ENCODE measurements at regions of chr20 and their contacts with region 1.

Region 1: GRCh38 chr20:38221119-38221589 is 39.4 kb downstream of the KIAA1755 start:
- DNase-seq: no peak
- H3K4me3 ChIP-seq: no peak overlapping the region
- H3K27ac ChIP-seq: no peak overlapping the region
- H3K4me1 ChIP-seq: peaks cover 34% of the 10 kb centered on the region
- H3K27me3 ChIP-seq: no peaks in the 10 kb centered on the region
- CTCF ChIP-seq: peak; percentile 69 to 97

Region 2: GRCh38 chr20:37564388-37565133 is 656.6 kb before region 1 on chr20:
- CTCF ChIA-PET with region 1: no interaction called
- dilution Hi-C with region 1: no loop called
- in situ Hi-C with region 1: loop called in 1 of 2 experiments (anchors 25 kb)
- intact Hi-C with region 1: loop called (anchors 1 kb)
- DNase-seq: peak; percentile 7
- H3K4me3 ChIP-seq: no peak overlapping the region
- H3K27ac ChIP-seq: no peak overlapping the region
- H3K4me1 ChIP-seq: no peaks in the 10 kb centered on the region
- H3K27me3 ChIP-seq: peaks cover 3% of the 10 kb centered on the region
- CTCF ChIP-seq: peak; percentile 57 to 96

Region 3: DNA sequence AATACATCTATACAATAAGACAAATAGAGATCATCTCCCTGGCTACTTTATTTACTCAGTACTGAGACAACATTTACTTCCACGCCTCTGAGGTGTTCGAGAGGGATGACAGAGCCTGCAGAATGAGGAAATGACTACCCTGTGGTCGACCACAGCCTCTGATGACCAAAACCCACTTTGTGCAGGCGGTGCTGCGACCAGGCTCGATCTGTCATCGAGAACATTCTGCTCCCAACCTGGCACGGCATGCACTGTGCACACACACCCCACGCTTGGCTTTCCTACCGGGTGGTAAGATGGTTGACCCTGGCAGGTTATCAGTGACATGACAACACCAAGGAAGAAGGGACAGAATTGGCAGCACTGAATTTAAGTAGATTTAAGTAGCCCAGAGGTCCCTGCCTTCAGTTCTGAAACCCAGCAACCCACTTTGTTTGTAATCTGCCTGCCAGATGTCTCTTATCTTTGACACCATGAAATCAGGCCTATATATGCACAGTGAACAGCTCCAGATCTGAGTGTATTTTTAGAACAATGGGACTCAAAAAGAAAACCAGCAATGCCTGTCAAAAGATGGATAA is 230.5 kb before region 1 on chr20:
- CTCF ChIA-PET with region 1: interaction called, 4 read pairs
- dilution Hi-C with region 1: no loop called
- in situ Hi-C with region 1: no loop called
- intact Hi-C with region 1: loop called (anchors 5 kb)
- DNase-seq: peak; percentile 91
- H3K4me3 ChIP-seq: no peak overlapping the region
- H3K27ac ChIP-seq: peak overlapping the region; percentile 76
- H3K4me1 ChIP-seq: peaks cover 58% of the 10 kb centered on the region
- H3K27me3 ChIP-seq: no peaks in the 10 kb centered on the region
- CTCF ChIP-seq: no peak

Region 4: GRCh38 chr20:38073307-38074071 is 147.7 kb before region 1 on chr20:
- CTCF ChIA-PET with region 1: interaction called, 33 read pairs
- dilution Hi-C with region 1: loop called (anchors 5 kb)
- in situ Hi-C with region 1: loop called (anchors 5 to 10 kb)
- intact Hi-C with region 1: loop called (anchors 1 kb)
- DNase-seq: peak; percentile 78
- H3K4me3 ChIP-seq: no peak overlapping the region
- H3K27ac ChIP-seq: no peak overlapping the region
- H3K4me1 ChIP-seq: peaks cover 8% of the 10 kb centered on the region
- H3K27me3 ChIP-seq: no peaks in the 10 kb centered on the region
- CTCF ChIP-seq: peak; percentile 79 to 90

Region 5: DNA sequence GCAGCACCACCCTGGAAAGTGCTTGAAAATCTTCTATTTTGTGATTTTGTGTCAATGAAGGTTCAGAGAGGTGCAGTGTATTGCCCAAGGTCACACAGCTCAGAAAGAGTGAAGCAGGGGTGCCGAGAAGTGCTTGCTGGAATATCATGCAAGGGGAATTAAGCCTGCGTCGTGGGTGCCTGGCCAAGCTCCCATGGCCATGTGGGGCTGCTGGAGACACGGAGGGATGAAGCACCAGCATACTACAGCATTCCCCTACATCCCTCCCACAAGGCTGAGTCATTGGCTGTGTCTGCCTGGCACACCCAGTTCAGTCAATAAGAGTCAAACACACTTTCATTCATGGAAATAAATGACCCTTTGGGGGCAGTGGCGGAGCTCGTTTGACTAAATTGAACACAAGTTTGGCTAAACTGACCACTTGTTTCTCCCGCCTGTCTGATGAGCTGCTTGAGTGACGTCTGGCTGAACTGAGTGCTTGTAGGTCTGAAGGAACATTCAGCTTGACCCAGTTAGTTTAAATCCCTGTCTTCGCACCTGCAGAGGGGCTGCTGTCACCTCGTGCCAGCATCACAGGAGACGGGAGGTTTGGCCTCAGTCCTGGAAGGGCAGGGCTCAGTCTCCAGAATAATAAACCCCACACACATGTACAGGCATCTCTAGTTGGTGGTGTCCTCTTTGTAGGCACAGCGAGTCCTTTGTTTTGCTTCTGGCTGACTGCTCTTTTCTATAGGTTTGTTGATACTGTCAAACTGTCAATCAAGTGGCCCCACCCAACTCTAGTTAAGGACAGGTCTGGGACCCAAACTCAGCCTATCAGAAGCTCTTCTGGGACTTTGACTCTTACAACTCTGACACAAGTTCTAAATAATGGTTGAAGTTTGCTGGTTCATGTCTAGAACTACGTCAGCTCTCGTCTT is 47.7 kb before region 1 on chr20:
- CTCF ChIA-PET with region 1: no interaction called
- dilution Hi-C with region 1: loop called (anchors 5 kb)
- in situ Hi-C with region 1: no loop called
- intact Hi-C with region 1: loop called (anchors 1 kb)
- DNase-seq: peak; percentile 87
- H3K4me3 ChIP-seq: no peak overlapping the region
- H3K27ac ChIP-seq: peak overlapping the region; percentile 68
- H3K4me1 ChIP-seq: peaks cover 40% of the 10 kb centered on the region
- H3K27me3 ChIP-seq: no peaks in the 10 kb centered on the region
- CTCF ChIP-seq: peak in 1 of 2 donors; percentile 25

Region 6: DNA sequence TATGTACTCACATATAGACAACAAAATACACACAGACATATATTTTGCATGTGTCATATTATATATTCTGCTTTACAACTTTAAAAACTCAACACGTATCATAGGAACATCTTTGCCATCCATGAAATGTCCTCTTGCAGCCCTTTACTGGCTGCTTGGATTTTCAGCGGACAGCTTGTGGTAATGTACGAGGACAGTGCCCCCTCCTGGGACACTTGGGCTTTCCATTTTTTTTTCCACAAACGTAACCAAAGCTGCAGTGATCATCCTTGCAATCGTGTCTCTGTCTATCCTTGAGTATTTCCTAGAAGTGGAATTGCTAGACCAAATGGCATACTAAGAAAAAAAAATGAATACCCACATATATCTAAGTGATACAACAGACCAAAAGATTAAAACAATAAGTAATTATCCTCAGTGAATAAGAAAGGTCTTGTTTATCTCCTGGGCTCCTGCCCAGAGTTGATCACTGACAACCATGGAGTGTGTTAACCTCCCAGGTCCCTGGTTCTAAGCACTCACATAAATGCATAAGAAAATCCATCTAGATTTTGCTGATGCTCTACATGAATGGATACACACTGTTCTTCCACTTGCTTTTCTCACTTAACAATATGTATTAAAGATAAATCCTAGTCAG is 100.9 kb after region 1 on chr20:
- CTCF ChIA-PET with region 1: interaction called, 5 read pairs
- dilution Hi-C with region 1: loop called (anchors 5 kb)
- in situ Hi-C with region 1: no loop called
- intact Hi-C with region 1: no loop called
- DNase-seq: peak; percentile 29
- H3K4me3 ChIP-seq: no peak overlapping the region
- H3K27ac ChIP-seq: no peak overlapping the region
- H3K4me1 ChIP-seq: no peaks in the 10 kb centered on the region
- H3K27me3 ChIP-seq: no peaks in the 10 kb centered on the region
- CTCF ChIP-seq: peak; percentile 64 to 72

Measured in mammary epithelial cell (primary cell).